ENCODE measurements at regions of chr13 and their contacts with region 1.

Region 1: GRCh38 chr13:52011632-52012511 is at the start of gene ALG11:
- DNase-seq: peak; percentile 79
- H3K4me3 ChIP-seq: peak within 1 kb of the TSS; percentile 96
- CTCF ChIP-seq: no peak

Region 2: DNA sequence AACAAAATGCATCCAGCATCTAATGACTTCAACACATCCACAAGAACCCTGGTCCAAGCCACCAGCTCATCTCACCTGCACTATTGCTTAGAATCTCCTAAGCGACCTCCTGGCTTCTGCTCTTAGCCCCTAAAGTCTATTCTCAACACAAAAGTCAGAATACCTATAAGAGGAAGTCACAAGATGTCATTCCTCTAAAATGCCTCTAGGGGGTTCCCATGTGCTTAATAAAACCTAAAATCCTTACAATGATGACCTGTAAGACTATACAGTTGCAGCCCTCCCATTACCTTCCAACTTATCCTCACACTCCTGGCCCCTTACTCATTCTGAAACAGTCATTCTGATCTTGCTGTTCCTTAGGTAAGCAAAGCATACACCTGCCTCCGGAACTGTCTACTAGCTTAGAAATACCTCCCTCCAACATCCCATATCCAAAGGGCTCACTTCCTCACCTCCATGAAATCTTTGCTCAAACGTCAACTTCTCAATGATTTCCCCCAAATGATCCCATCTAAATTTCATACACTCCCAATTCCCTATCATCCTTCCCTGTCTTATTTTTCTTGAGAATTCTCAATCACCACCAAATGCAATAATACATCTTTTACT is 10.6 kb before region 1 on chr13:
- CTCF ChIA-PET with region 1: interaction called, 30 read pairs
- POLR2A ChIA-PET with region 1: no interaction called
- DNase-seq: no peak
- H3K4me3 ChIP-seq: no peak overlapping the region
- CTCF ChIP-seq: peak; percentile 39

Region 3: DNA sequence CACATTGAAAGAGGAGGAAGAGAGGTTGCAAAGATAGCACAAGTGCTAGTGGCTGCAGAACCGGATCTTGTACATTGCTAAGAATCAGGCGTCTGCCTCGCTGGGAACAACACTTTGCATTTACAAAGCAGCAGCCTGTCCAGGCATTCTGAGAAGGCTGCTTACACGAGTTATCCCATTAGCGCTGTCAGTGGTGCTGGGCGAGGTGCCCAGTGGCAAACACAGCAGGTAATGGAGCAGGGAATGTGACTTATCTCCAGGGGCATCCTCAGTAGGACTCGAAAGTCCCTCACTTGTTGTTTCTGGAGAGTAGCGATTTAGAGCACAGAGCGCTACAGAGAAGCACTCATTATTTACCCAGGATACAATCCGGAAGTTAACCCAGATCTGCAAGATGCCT is 1226.4 kb after region 1 on chr13:
- CTCF ChIA-PET with region 1: no interaction called
- POLR2A ChIA-PET with region 1: no interaction called
- DNase-seq: no peak
- H3K4me3 ChIP-seq: no peak overlapping the region
- CTCF ChIP-seq: no peak

Measured in AG04449 (cell line).